IMR-90 (cell line): ENCODE measurements at regions of chr2 and their contacts with region 1.

Region 1: DNA sequence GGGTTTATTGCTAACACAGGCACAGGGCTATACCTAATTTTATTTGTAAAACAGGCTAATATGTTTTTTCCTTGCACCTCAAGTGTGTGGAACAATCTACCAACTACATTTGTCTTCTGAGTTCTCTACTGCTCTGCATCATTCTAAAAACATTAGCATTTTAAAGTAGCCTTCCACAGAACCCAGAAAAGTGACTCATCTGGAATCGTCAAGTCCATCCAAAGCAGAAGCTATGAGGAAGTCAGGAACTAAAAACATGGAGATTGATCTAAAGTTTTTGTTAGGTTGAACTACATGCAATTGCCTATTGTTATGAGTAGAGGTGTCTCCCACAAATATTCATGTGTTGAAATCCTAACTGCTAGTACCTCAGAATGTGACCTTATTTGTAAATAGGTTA is 70.9 kb downstream of the SUCLG1 start:
- DNase-seq: peak; percentile 55
- ATAC-seq: peak; percentile 81
- H3K4me3 ChIP-seq: no peak overlapping the region
- H3K27ac ChIP-seq: no peak overlapping the region
- H3K4me1 ChIP-seq: no peaks in the 10 kb centered on the region; the same call in 1 of the 2 replicates
- H3K27me3 ChIP-seq: peaks cover 3% of the 10 kb centered on the region; the same call in 1 of the 2 replicates
- CTCF ChIP-seq: no peak
- POLR2A ChIP-seq: no peak
- RAD21 ChIP-seq: no peak

Region 2: DNA sequence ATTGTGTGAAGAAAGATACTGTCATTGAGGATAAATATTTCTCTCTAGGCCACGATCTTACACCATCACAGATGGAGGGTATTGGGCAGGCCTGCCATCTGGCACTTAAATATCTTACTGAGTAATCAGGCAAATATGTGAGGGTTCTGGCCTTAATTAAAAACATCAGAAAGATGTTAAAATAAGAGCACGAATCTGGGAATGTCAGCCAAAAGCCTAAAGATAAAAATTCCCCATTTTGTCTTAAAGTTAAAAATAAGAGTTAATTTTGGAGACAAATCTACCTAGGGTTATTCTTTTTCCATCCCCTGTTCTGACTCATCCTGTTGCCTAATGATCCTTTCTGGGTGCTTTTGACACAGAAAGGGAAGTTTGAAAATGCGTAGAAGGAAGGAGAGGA is 50.1 kb before region 1 on chr2:
- CTCF ChIA-PET with region 1: no interaction called
- POLR2A ChIA-PET with region 1: no interaction called
- dilution Hi-C with region 1: no loop called
- in situ Hi-C with region 1: no loop called
- intact Hi-C with region 1: loop called (anchors 5 kb)
- DNase-seq: no peak
- ATAC-seq: no peak
- H3K4me3 ChIP-seq: no peak overlapping the region
- H3K27ac ChIP-seq: no peak overlapping the region
- H3K4me1 ChIP-seq: no peaks in the 10 kb centered on the region
- H3K27me3 ChIP-seq: no peaks in the 10 kb centered on the region
- CTCF ChIP-seq: no peak
- POLR2A ChIP-seq: no peak
- RAD21 ChIP-seq: no peak